Aorta (tissue), 5 donors: ENCODE measurements at regions of chr9 and their contacts with region 1.

Region 1: DNA sequence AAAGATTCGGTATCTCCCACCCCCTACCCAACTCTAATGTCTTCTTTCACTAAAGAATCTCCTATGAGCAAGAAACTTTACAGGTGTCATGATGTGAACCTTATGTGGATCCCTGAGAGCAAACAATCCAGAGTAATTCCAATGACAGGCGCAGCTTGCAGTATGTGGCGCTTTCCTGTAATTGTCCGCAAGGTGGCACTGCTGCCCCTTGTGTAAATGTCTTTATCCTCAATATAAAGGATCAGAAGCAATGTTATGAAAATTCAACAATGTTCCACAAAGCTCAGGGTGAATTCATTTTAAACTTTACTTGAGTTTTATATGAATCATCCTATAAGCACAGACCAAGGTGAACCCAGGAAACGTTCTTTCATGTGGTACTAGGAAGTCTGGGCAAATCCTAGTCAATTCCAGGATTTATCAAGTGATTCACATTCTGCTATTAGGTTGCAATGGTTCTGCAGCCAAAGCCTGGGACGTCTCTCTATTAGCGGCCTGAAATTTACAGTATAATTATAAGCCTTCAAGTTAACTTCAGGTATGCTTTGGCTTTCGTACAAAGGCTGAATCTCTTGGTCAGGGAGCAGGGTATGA is 113.7 kb downstream of the TRPM6 start:
- DNase-seq: peak; percentile 78 to 86
- ATAC-seq: peak; percentile 80
- H3K4me3 ChIP-seq: no peak overlapping the region
- H3K27ac ChIP-seq: no peak overlapping the region
- H3K4me1 ChIP-seq: no peaks in the 10 kb centered on the region
- H3K27me3 ChIP-seq: no peaks in the 10 kb centered on the region

Region 2: DNA sequence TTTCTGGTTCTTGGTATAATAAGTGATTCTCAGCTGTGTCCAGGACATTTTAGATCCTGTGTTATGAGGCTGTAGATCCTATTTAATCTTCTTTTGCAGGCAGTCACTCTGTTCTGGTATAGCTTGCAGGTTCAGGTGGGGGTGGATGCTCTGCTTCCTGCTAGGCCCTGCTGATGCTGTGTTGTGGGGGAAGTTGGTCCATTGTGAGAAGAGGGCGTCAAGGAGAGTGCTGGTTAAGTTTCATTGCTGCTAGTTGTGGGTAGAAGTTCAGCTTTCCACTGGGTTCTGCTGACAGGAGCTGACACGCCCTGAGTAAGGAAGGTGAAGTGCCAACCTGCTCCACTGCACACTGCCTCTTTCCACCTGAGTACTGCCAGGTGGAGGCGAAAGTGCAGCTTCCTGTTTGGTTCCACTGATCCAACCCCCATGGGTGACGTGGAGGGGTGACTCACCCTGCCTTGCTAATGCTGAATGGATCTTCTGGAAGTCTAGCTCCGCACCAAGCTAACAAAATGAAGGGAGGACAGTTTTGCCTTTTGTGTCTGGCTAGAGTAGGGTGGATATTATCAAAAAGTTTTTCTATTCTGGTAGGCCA is 297.6 kb after region 1 on chr9:
- intact Hi-C with region 1: loop called (anchors 2 to 5 kb)
- DNase-seq: no peak
- ATAC-seq: no peak
- H3K4me3 ChIP-seq: no peak overlapping the region
- H3K27ac ChIP-seq: no peak overlapping the region
- H3K4me1 ChIP-seq: no peaks in the 10 kb centered on the region
- H3K27me3 ChIP-seq: no peaks in the 10 kb centered on the region